Activated CD8-positive, alpha-beta memory T cell treated with anti-CD3 and anti-CD28 coated beads, Interleukin-2, amount 10 ng/mL, durations not matched to agents 7 days and 5 days (primary cell): ENCODE measurements at regions of chr15 and their contacts with region 1.

Region 1: DNA sequence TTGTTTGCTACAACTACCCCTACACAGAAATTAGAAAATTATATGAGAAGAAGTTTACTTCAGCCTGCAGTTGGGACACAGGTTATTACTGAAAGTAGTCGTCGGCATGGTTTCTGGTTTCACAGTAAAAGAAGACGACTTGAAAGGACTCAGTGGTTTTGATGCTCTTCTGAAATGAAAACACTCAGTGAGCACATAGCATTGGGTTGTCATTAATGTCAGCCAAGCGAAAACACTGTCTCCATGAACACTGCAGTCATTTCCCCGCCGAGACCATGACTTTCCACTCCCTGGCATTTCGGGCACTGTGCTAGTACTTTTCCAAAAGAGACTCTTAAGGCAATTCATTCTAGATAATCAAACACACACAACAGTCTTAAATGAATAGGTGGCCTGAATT is 69.2 kb upstream of the ICE2 start:
- DNase-seq: peak; percentile 75
- ATAC-seq: peak; percentile 63
- H3K4me3 Mint-ChIP-seq: peak overlapping the region; percentile 70
- H3K27ac Mint-ChIP-seq: peak overlapping the region; percentile 96
- H3K4me1 Mint-ChIP-seq: peaks cover 96% of the 10 kb centered on the region
- H3K27me3 Mint-ChIP-seq: no peaks in the 10 kb centered on the region

Region 2: GRCh38 chr15:60568301-60568742 is 20.2 kb after region 1 on chr15:
- CTCF ChIA-PET with region 1: interaction called, 17 read pairs
- DNase-seq: no peak
- ATAC-seq: no peak
- H3K4me3 Mint-ChIP-seq: no peak overlapping the region
- H3K27ac Mint-ChIP-seq: peak overlapping the region; percentile 80
- H3K4me1 Mint-ChIP-seq: peaks cover 90% of the 10 kb centered on the region
- H3K27me3 Mint-ChIP-seq: no peaks in the 10 kb centered on the region